Activated CD4-positive, alpha-beta T cell treated with anti-CD3 and anti-CD28 coated beads for 36 hours (primary cell): ENCODE measurements at regions of chr2 and their contacts with region 1.

Region 1: DNA sequence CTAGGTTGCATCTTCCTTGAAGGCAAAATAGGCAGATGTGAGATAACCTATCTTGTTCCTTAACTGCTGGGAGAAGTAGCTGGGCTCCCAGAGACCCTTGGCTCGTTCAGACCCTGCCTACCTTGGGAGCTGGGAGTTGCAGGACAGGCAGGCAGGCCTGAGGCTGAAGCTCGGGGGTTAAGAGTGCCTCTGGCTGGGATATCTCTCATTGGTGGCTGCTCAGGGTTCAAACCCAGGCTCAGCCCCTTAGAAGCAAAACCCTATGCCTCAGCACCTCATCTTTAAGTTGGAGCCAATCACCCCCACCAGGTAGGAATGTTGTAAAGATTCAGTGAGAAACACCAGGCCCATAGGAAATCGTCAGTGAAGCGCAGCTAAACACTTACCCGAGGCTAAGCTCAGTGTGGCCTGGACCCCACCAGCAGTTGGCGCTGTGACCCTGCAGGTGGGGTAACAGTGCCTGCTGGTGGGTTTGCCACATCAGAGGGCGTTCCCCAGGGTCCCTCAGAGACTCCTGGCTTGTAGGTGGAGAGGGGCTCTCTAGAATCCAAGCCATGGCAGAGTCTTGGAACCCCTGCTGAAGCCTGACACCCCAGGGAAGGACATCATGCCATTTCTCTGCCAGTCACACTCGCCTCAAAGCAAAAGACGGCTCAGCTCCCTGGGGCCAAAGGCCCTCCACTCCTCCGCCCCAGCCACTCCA is 54.6 kb upstream of the GPR17 start:
- DNase-seq: peak; percentile 84
- ATAC-seq: peak; percentile 97
- H3K4me3 Mint-ChIP-seq: no peak overlapping the region
- H3K27ac Mint-ChIP-seq: no peak overlapping the region
- H3K4me1 Mint-ChIP-seq: peaks cover 1% of the 10 kb centered on the region
- H3K27me3 Mint-ChIP-seq: no peaks in the 10 kb centered on the region

Region 2: DNA sequence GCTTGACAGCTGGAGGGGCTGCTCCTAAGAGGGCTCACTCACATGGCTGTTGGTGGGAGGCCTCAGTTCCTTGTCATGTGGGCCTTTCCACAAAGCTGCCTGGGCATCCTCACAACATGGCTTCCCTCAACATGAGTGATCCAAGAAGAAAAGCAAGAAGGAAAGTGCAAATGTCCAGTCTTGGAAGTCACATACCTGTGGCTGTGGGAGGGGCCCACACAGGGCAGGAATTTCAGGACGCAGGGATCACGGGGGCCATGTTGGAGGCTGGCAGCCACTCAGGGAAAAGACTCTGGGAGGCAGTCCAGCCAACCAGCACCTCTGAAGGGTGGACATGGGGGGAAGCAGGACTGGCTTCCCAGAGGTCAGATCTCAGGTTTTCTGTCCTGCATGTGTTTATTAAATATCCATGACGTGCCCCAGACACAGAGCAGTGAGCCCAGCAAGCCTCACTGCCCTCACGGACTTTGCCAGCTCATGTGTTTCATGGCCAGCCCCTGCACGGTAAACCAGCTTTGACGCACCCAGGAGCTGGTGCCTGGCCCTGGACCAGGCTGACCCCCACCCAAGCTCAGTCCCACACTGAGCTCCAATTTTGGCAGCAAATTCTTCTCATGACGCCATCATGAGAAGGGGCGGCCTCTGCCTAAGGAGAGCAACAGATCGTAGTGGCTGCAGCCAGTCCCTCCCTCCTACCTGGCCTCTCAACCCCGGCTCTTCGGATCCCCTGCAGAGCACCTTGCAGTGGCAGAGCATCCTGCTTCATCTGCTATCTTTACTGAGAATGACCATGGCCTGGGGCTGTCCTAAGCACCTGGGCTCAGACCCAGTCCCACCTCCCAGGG is 19.9 kb after region 1 on chr2:
- CTCF ChIA-PET with region 1: interaction called, 10 read pairs
- POLR2A ChIA-PET with region 1: no interaction called
- intact Hi-C with region 1: no loop called
- DNase-seq: peak; percentile 1
- ATAC-seq: no peak
- H3K4me3 Mint-ChIP-seq: no peak overlapping the region
- H3K27ac Mint-ChIP-seq: no peak overlapping the region
- H3K4me1 Mint-ChIP-seq: peaks cover 15% of the 10 kb centered on the region
- H3K27me3 Mint-ChIP-seq: no peaks in the 10 kb centered on the region

Region 3: DNA sequence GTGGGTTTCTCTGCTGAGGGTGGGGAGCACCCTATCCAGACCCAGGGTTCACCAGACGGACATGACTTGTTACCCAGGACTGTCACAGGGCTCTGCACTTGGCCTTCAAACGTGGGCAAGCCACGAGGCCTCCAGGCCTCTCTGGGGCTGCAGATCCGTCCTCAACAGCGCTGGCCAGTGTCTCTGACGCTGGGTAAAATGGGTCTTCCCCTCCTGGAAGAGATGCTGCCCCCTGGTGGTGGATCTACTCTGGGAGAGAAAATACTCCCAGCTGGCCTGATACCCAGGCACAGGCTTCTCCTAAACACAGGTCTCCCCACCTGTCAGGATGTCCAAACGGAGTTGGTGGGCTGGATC is 58.3 kb after region 1 on chr2:
- CTCF ChIA-PET with region 1: interaction called, 145 read pairs
- POLR2A ChIA-PET with region 1: interaction called, 8 read pairs
- intact Hi-C with region 1: loop called (anchors 1 kb)
- DNase-seq: peak; percentile 92
- ATAC-seq: peak; percentile 85
- H3K4me3 Mint-ChIP-seq: no peak overlapping the region
- H3K27ac Mint-ChIP-seq: no peak overlapping the region
- H3K4me1 Mint-ChIP-seq: peaks cover 10% of the 10 kb centered on the region
- H3K27me3 Mint-ChIP-seq: no peaks in the 10 kb centered on the region

Region 4: DNA sequence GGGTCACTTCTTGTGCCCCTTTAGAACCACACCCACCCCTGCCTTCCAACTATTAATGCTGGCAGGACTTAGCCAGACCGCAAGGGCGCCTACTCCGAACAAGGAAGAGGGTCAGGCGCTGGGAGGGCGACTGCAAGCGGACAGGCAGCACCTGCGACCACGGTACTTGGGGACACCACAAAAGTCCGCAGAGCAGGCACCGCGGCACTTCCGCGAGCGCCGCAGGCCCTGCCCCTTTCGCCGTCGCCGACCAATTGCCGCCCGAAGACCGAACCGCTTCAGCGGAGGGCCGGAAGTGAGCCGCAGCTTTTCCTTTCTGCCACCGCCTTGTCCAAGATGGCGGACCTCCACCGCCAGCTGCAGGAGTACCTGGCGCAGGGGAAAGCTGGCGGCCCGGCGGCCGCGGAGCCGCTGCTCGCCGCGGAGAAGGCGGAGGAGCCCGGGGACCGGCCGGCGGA is 109.8 kb after region 1 on chr2 and contains the start of gene SFT2D3:
- CTCF ChIA-PET with region 1: interaction called, 4 read pairs
- POLR2A ChIA-PET with region 1: no interaction called
- intact Hi-C with region 1: loop called in 1 of 2 experiments (anchors 2 kb)
- DNase-seq: peak; percentile 95
- ATAC-seq: peak; percentile 87
- H3K4me3 Mint-ChIP-seq: peak within 1 kb of the TSS; percentile 88
- H3K27ac Mint-ChIP-seq: peak within 1 kb of the TSS; percentile 95
- H3K4me1 Mint-ChIP-seq: peaks cover 34% of the 10 kb centered on the region
- H3K27me3 Mint-ChIP-seq: no peaks in the 10 kb centered on the region
- total RNA-seq, gene SFT2D3: 2.8 to 3.1 TPM